Pancreas (tissue), 10 donors: ENCODE measurements at regions of chr3 and their contacts with region 1.

Region 1: DNA sequence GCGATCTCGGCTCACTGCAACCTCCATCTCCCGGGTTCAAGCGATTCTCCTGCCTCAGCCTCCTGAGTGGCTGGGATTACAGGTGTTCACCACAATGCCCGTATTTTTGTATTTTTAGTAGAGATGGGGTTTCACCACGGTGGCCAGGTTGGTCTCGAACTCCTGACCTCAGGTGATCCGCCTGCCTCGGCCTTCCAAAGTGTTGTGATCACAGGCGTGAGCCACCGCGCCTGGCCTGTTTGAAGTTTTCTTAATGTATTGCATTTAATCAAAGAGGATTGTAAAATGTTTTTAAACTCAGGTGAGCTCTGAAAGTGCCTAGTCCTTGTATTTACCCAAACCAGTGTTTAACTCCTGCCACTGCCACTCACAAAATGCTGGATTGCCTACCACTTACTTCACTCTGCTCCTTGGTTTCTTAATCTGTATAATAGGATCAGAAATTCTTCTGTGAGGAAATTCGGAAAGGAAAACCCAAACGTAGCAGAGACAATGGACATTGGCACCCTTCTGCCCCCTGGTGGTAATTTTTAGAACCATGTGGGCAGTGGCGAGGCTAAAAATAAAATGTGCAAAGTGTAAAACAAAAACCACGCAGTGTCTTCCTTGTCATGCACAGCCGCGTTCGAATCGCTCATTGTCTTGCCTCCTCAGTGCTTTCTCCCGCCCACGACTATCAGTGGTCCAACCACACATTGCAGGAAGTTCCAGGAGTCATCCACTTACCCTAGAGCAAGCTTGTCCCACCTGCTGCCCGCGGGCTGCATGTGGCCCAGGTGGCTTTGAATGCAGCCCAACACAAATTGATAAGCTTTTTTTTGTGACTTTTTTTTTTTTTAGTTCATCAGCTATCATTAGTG is 27.3 kb downstream of the CEP19 start:
- DNase-seq: peak in 5 of 6 donors; percentile 31 to 66 (median 49)
- ATAC-seq: peak; percentile 79 to 92 (median 86)
- H3K4me3 ChIP-seq: no peak overlapping the region
- H3K27ac ChIP-seq: no peak overlapping the region
- H3K4me1 ChIP-seq: peaks cover 0 to 7% (median 0%) of the 10 kb centered on the region in 3 donors
- H3K27me3 ChIP-seq: no peaks in the 10 kb centered on the region
- CTCF ChIP-seq: peak; percentile 70 to 82 (median 81)

Region 2: GRCh38 chr3:196554205-196554604 is 130.6 kb before region 1 on chr3:
- intact Hi-C with region 1: no loop called
- DNase-seq: no peak
- ATAC-seq: peak in 1 of 4 donors; percentile 30
- H3K4me3 ChIP-seq: no peak overlapping the region
- H3K27ac ChIP-seq: no peak overlapping the region
- H3K4me1 ChIP-seq: no peaks in the 10 kb centered on the region
- H3K27me3 ChIP-seq: no peaks in the 10 kb centered on the region
- CTCF ChIP-seq: no peak

Region 3: DNA sequence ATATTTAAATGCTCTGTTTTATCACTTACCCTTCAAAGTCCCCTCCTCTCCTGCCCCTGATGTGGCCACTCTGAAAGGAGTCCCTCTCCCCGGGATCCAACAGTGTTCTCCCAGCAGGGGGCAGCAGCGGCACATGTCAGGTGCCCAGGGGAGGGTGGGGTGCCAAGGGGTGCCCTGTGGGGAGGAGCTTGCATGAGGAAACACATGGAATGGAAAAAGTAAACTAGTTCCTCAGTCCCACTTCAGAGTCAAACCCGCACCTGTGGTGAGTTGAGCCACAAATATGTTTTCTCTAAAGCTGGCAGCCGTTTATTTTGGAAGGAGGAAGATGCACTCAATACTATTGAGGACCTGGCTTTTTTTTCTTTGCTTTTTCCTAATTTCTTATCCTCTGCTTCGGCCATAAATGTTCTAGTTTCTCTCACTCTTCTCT is 75.4 kb before region 1 on chr3:
- intact Hi-C with region 1: loop called in 2 of 3 experiments (anchors 5 kb)
- DNase-seq: peak; percentile 80 to 98 (median 90)
- ATAC-seq: peak; percentile 97 to 100 (median 100)
- H3K4me3 ChIP-seq: no peak overlapping the region
- H3K27ac ChIP-seq: peak overlapping the region in 1 of 4 donors; percentile 15
- H3K4me1 ChIP-seq: peaks cover 0 to 3% (median 0%) of the 10 kb centered on the region in 3 donors
- H3K27me3 ChIP-seq: no peaks in the 10 kb centered on the region
- CTCF ChIP-seq: peak; percentile 37 to 80 (median 68)